B cell (primary cell): ENCODE measurements at regions of chr7 and their contacts with region 1.

Region 1: DNA sequence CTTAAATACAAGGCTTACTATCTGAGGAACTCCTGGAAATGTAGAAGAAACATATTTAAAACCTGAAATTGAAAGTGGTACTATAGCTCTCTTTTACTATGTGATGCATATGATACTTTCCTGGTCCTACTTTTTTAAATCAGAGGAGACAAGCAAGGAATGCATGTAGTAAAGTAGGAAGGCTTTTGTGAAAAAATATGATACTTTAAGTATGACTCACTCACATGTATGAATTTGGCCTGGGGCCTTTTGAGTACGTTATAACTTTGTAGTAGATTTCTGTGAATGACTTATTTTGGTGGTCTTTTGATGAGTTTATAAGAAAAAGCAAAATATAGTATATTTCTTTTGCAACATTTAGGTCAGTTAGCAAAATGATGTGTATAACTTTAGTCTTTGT is 53.8 kb downstream of the TAX1BP1 start:
- DNase-seq: no peak
- ATAC-seq: no peak
- H3K4me3 ChIP-seq: no peak overlapping the region
- H3K4me3 Mint-ChIP-seq: no peak overlapping the region
- H3K27ac ChIP-seq: no peak overlapping the region
- H3K27ac Mint-ChIP-seq: no peak overlapping the region
- H3K4me1 ChIP-seq: no peaks in the 10 kb centered on the region
- H3K4me1 Mint-ChIP-seq: no peaks in the 10 kb centered on the region
- H3K27me3 ChIP-seq: no peaks in the 10 kb centered on the region
- H3K27me3 Mint-ChIP-seq: no peaks in the 10 kb centered on the region
- CTCF ChIP-seq: no peak

Region 2: DNA sequence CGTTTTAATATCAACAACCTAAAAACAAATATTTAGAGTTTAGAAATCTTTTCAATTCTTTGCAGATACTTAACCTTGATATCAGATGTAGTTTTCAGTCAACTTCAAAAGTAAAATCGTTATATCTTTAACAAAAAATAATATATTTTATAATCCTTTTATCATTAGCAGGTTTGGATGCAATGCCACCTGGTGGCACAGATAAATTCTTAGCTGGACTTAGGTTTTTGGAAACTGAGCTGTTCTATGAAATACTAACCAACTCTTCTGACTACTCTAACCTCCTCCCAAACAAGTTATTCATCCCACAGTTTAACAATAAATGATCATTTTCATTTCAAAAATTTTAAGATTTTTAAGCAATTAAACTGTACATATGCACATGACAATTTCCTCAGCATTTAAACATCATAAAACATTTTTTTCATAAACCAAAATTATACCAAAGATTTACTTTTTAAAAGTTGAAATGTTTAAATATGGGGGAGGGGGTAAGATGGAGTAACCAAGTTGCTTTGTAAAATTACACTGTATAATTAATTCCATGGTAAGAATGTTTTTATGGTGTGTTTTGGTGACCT is 188.0 kb before region 1 on chr7:
- CTCF ChIA-PET with region 1: no interaction called
- POLR2A ChIA-PET with region 1: no interaction called
- intact Hi-C with region 1: no loop called
- DNase-seq: no peak
- ATAC-seq: no peak
- H3K4me3 ChIP-seq: no peak overlapping the region
- H3K4me3 Mint-ChIP-seq: no peak overlapping the region
- H3K27ac ChIP-seq: no peak overlapping the region
- H3K27ac Mint-ChIP-seq: no peak overlapping the region
- H3K4me1 ChIP-seq: no peaks in the 10 kb centered on the region
- H3K4me1 Mint-ChIP-seq: no peaks in the 10 kb centered on the region
- H3K27me3 ChIP-seq: no peaks in the 10 kb centered on the region
- H3K27me3 Mint-ChIP-seq: no peaks in the 10 kb centered on the region
- CTCF ChIP-seq: no peak

Region 3: GRCh38 chr7:27750316-27750715 is 43.5 kb before region 1 on chr7:
- CTCF ChIA-PET with region 1: no interaction called
- POLR2A ChIA-PET with region 1: no interaction called
- intact Hi-C with region 1: loop called (anchors 5 kb)
- DNase-seq: no peak
- ATAC-seq: no peak
- H3K4me3 ChIP-seq: no peak overlapping the region
- H3K4me3 Mint-ChIP-seq: no peak overlapping the region
- H3K27ac ChIP-seq: no peak overlapping the region
- H3K27ac Mint-ChIP-seq: no peak overlapping the region
- H3K4me1 ChIP-seq: no peaks in the 10 kb centered on the region
- H3K4me1 Mint-ChIP-seq: peaks cover 12% of the 10 kb centered on the region
- H3K27me3 ChIP-seq: no peaks in the 10 kb centered on the region
- H3K27me3 Mint-ChIP-seq: no peaks in the 10 kb centered on the region
- CTCF ChIP-seq: no peak